CD4-positive, alpha-beta memory T cell (primary cell): ENCODE measurements at regions of chr14 and their contacts with region 1.

Region 1: DNA sequence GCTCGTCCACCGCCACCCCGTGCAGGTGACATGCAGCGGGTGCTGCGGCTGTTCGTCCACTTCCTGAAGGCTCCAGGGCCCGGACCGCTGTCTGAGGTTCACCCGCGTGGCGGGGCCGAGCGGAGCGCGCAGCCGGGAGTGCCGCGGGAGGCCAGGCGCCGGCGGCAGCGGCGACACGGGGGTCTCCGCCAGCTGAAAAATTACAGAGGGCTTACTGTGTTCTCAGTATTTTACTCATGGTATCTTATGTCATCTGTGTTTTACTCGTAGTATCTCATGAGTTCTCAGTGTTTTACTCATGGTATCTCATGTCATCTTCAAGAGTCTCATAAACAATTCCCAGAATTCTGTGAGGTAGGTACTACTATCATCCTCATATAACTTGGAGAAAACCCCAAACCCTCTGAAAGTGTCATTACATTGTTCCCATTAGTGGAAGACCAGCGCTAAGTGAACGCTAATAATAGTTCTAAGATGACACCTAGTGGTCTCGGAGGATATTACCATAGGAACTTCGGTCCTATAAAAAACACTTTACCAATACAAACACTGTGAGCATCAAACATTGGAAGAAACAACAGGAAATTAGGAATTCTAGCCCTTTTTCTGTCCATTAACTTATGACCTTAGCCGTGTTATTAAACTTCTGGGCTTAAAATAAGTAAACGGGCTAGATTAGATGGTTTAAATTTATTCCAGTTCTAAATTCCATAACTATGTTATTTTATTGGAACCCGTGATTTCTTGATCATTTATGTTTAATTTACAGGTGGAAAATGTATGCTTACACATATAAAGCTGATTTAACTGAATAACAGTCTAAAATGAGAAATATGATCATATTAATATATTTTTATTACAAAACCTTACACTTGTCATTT is 32.4 kb downstream of the AK7 start:
- DNase-seq: peak in 4 of 5 donors; percentile 52 to 60 (median 56)
- H3K4me3 ChIP-seq: peak overlapping the region; percentile 18 to 40
- H3K4me3 Mint-ChIP-seq: peak overlapping the region; percentile 49 to 95 (median 80)
- H3K27ac ChIP-seq: no peak overlapping the region
- H3K27ac Mint-ChIP-seq: peak overlapping the region in 2 of 7 donors; percentile 57 to 60
- H3K4me1 ChIP-seq: peaks cover 7% of the 10 kb centered on the region
- H3K4me1 Mint-ChIP-seq: peaks cover 3 to 5% (median 4%) of the 10 kb centered on the region in 4 donors
- H3K27me3 ChIP-seq: no peaks in the 10 kb centered on the region
- H3K27me3 Mint-ChIP-seq: peaks cover 1 to 4% of the 10 kb centered on the region in 2 donors

Region 2: DNA sequence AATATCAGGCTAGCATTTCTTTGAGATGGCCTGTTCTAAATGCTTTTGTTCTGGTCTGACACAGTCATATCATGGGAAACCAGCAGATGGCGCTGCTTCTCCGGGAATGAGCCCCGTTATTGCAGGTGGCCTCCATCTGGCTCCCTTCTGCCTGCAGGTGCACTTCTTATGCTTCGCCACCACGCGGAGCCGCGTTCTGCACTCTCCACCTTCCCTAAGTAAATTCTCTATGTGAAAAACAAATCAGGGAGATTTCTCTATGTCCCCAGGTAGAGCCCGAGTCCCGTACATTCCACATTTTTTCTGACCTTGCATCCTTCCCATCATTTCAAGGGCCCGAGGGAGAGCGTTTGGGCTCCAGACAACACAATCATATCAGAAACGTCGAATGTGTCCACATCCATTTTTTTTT is 863.3 kb before region 1 on chr14:
- CTCF ChIA-PET with region 1: no interaction called
- POLR2A ChIA-PET with region 1: no interaction called
- intact Hi-C with region 1: loop called (anchors 10 kb)
- DNase-seq: peak; percentile 69 to 79 (median 78)
- H3K4me3 ChIP-seq: no peak overlapping the region
- H3K4me3 Mint-ChIP-seq: no peak overlapping the region
- H3K27ac ChIP-seq: no peak overlapping the region
- H3K27ac Mint-ChIP-seq: no peak overlapping the region
- H3K4me1 ChIP-seq: no peaks in the 10 kb centered on the region
- H3K4me1 Mint-ChIP-seq: peaks cover 3 to 5% (median 4%) of the 10 kb centered on the region in 4 donors
- H3K27me3 ChIP-seq: no peaks in the 10 kb centered on the region
- H3K27me3 Mint-ChIP-seq: peaks cover 2 to 5% of the 10 kb centered on the region in 2 donors

Region 3: GRCh38 chr14:95774265-95775160 is 649.8 kb before region 1 on chr14:
- CTCF ChIA-PET with region 1: no interaction called
- POLR2A ChIA-PET with region 1: no interaction called
- intact Hi-C with region 1: loop called (anchors 10 kb)
- DNase-seq: peak in 4 of 5 donors; percentile 26 to 37 (median 28)
- H3K4me3 ChIP-seq: no peak overlapping the region
- H3K4me3 Mint-ChIP-seq: no peak overlapping the region
- H3K27ac ChIP-seq: no peak overlapping the region
- H3K27ac Mint-ChIP-seq: no peak overlapping the region
- H3K4me1 ChIP-seq: no peaks in the 10 kb centered on the region
- H3K4me1 Mint-ChIP-seq: peaks cover 0 to 2% (median under 1%) of the 10 kb centered on the region in 4 donors
- H3K27me3 ChIP-seq: no peaks in the 10 kb centered on the region
- H3K27me3 Mint-ChIP-seq: peaks cover 5 to 14% of the 10 kb centered on the region in 2 donors

Region 4: GRCh38 chr14:96100161-96101029 is 324.0 kb before region 1 on chr14:
- CTCF ChIA-PET with region 1: interaction called, 6 read pairs
- POLR2A ChIA-PET with region 1: no interaction called
- intact Hi-C with region 1: loop called (anchors 1 kb)
- DNase-seq: peak; percentile 56 to 68 (median 62)
- H3K4me3 ChIP-seq: no peak overlapping the region
- H3K4me3 Mint-ChIP-seq: no peak overlapping the region
- H3K27ac ChIP-seq: no peak overlapping the region
- H3K27ac Mint-ChIP-seq: peak overlapping the region in 4 of 7 donors; percentile 19 to 67 (median 52)
- H3K4me1 ChIP-seq: no peaks in the 10 kb centered on the region
- H3K4me1 Mint-ChIP-seq: peaks cover 0 to 6% (median 0%) of the 10 kb centered on the region in 4 donors
- H3K27me3 ChIP-seq: no peaks in the 10 kb centered on the region
- H3K27me3 Mint-ChIP-seq: no peaks in the 10 kb centered on the region

Region 5: GRCh38 chr14:96275177-96276112 is 148.9 kb before region 1 on chr14:
- CTCF ChIA-PET with region 1: no interaction called
- POLR2A ChIA-PET with region 1: no interaction called
- intact Hi-C with region 1: loop called (anchors 1 kb)
- DNase-seq: peak; percentile 45 to 59 (median 50)
- H3K4me3 ChIP-seq: no peak overlapping the region
- H3K4me3 Mint-ChIP-seq: no peak overlapping the region
- H3K27ac ChIP-seq: no peak overlapping the region
- H3K27ac Mint-ChIP-seq: no peak overlapping the region
- H3K4me1 ChIP-seq: no peaks in the 10 kb centered on the region
- H3K4me1 Mint-ChIP-seq: peaks cover 0 to 3% (median under 1%) of the 10 kb centered on the region in 4 donors
- H3K27me3 ChIP-seq: no peaks in the 10 kb centered on the region
- H3K27me3 Mint-ChIP-seq: no peaks in the 10 kb centered on the region

Region 6: DNA sequence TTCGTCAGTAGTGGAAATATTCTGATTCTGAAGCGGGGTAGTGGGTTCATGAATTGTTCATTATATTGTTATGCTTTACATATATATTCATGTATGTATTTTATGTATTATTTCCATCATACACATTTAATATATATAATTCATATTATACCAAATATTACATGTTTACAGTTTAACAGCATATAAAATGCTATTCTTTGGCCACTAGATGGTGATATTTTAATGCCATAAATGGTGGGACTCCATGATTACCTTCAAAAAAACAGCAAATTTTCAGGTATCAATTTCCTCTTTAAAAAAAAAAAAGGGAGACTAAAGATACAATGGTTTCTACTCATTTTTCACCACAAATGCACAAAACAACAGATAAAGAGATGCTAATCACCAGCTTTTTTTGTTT is 127.3 kb before region 1 on chr14:
- CTCF ChIA-PET with region 1: interaction called, 36 read pairs
- POLR2A ChIA-PET with region 1: no interaction called
- intact Hi-C with region 1: no loop called
- DNase-seq: peak in 4 of 5 donors; percentile 24 to 37 (median 32)
- H3K4me3 ChIP-seq: no peak overlapping the region
- H3K4me3 Mint-ChIP-seq: no peak overlapping the region
- H3K27ac ChIP-seq: no peak overlapping the region
- H3K27ac Mint-ChIP-seq: no peak overlapping the region
- H3K4me1 ChIP-seq: no peaks in the 10 kb centered on the region
- H3K4me1 Mint-ChIP-seq: no peaks in the 10 kb centered on the region
- H3K27me3 ChIP-seq: no peaks in the 10 kb centered on the region
- H3K27me3 Mint-ChIP-seq: no peaks in the 10 kb centered on the region

Region 7: DNA sequence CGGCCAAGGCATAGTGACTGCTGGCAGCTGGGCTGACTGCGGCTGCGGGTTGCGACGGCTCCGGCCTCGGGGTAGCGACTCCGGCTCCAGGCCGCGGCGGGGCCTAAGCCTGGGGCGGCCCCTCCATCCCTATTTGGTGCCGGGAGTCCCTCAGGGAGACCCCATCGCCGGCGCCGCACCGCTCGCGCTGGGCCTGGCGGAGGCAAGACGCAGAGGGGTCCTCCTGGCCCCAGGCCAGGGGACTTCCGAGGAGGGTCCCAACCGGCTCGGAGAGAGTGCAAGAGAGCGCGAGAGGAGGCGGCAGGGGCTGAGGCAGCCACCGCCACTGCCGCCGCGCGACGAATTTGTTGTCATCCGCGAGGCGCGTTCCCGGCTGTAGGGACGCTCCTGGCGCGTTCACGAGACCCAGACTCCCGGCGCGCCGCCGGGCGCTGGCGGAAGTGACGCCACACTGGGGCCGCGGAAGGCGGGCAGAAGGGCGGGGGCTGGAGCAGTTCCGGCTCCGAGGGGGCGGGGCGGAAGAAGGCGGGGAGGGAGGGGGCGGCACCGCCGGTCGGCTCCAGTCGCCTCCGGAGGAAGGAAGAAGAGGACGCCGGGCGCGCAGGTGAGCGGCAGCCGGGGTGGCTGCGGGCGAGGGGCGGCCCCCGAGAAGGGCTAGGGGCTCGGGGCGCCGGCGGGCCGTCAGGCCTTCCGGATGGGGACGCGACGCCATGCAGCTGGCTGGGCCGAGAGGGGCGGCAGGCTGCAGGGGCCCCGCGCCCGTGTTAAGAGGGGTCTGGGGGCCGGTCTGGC is 61.2 kb before region 1 on chr14 and contains the starts of genes ATG2B and GSKIP:
- CTCF ChIA-PET with region 1: no interaction called
- POLR2A ChIA-PET with region 1: no interaction called
- intact Hi-C with region 1: loop called (anchors 1 kb)
- DNase-seq: peak; percentile 95 to 99 (median 97)
- H3K4me3 ChIP-seq: peak within 1 kb of the TSS; percentile 82 to 92
- H3K4me3 Mint-ChIP-seq: peak within 1 kb of the TSS; percentile 83 to 95 (median 92)
- H3K27ac ChIP-seq: peak within 1 kb of the TSS; percentile 97
- H3K27ac Mint-ChIP-seq: peak within 1 kb of the TSS; percentile 84 to 97 (median 94)
- H3K4me1 ChIP-seq: peaks cover 46% of the 10 kb centered on the region
- H3K4me1 Mint-ChIP-seq: peaks cover 36 to 59% (median 49%) of the 10 kb centered on the region in 4 donors
- H3K27me3 ChIP-seq: no peaks in the 10 kb centered on the region
- H3K27me3 Mint-ChIP-seq: no peaks in the 10 kb centered on the region
- total RNA-seq, gene ATG2B: 28.4 to 37.8 TPM
- total RNA-seq, gene GSKIP: 24.3 to 25.3 TPM